Left cardiac atrium (tissue), 4 donors: ENCODE measurements at regions of chr3 and their contacts with region 1.

Region 1: GRCh38 chr3:32106280-32106928 is at the start of gene GPD1L:
- DNase-seq: peak; percentile 96
- ATAC-seq: peak; percentile 94 to 98
- total RNA-seq, gene GPD1L: 177 to 253 TPM

Region 2: DNA sequence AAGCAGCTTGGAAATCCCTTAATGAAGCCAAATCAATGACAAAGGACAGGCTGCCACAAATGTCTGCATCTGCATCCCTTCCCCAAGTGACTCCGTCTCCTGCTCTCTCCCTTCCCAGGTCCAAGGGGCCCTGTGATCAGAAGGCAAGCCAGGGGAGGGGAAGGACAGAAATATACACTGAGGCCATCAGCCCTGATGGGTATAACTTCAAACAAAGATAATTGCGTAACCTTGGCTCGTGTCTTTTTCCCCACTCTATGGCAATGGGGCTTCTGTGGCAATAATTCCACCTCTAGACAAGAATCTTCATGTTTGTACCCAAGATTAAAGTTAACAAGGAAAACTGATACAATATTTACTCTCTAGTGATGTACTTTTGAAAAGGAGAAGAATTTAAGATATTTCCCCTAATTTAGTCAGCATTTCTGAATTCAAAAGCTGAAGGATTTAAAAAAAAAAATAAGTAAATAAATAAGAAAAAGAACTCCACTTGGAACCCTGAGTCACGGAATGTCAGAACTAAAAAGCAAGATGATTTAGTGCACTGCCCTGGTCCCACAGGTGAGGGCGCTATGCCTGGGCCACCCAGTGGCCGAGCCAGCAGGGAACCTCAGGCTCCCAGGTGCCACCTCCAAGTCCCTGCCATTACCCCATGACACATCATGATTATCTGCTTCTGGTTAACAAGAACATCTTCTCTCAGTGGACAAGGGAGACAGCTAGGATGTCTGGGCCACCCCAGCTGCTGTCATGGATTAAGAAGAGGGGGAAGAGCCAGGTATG is 419.2 kb before region 1 on chr3:
- intact Hi-C with region 1: no loop called
- DNase-seq: no peak
- ATAC-seq: no peak

Region 3: DNA sequence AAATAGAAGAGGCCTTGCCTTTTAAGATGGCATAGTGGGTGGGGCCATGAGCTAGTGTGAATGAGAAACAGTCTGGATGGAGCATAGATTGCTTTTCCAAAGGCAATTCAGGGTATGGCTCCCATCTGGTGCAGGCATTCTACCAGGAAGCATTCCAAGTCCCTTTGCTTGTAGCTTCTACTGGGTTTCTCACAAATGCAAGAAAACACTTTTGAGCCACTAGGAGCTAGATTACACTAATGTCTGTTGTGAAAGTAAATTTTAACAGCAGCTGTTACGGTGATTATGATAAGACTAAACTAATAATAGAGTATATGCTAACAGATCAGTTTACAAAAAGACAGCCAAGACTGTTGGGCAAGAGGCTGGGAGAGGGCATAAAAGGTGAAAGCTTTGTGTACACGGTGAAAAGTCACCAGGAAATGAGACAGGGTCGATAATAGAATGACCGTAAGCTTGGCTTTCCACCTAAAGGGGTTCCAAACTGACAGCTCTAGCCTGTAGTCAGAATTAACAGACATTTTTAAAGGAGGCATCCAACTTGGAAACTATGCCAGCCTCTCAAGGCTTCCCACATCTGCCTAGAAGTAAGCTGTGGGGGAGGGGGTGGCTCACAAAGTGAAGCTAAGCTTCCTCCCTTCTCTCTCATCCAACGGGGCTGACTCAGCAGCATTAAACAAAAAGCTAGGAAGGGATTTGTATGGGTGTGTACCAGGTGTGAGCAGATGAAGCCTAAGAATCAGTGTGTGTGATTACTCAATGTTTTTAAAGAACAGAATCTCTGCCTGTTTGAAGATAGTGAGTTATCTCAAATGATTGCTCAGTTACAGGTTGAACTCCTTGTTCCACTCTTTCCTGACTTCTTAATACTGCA is 61.1 kb before region 1 on chr3:
- intact Hi-C with region 1: loop called in 1 of 2 experiments (anchors 10 kb)
- DNase-seq: peak; percentile 49
- ATAC-seq: peak; percentile 85 to 95

Region 4: DNA sequence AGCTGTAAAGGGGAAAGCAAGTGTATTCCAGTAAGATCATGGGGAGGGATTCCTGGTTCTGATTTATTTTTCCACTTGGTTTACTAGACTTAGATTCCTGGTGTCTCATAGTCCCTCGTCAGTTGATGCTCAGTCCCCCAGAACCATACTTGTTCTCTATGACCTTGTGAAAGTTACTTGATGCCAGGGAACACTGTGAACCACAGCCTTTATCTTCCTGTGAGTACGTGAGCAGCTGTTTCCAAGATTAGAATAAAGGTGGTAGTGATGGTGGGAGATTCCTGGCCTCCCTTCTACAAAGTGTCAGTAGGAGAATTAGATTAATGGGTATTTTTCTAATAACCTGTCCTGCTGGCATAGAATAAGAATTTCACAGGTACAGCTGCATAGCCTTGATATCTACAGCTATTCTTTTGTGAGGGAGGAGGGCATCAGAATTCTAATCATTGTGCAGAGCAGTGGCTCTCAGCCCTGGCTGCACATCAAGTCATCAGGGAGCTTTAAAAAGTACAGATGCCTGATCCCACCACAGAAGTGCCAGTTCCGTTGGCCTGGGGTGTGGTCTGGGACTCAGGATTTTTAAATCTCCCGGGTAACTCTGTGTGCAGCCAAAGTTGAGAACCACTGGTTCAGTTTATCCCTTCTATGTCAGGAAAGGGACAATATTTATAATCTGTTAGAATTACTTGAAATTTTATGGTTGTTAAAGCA is 20.1 kb after region 1 on chr3:
- intact Hi-C with region 1: loop called in 1 of 2 experiments (anchors 2 kb)
- DNase-seq: peak; percentile 56
- ATAC-seq: peak; percentile 87 to 88

Region 5: DNA sequence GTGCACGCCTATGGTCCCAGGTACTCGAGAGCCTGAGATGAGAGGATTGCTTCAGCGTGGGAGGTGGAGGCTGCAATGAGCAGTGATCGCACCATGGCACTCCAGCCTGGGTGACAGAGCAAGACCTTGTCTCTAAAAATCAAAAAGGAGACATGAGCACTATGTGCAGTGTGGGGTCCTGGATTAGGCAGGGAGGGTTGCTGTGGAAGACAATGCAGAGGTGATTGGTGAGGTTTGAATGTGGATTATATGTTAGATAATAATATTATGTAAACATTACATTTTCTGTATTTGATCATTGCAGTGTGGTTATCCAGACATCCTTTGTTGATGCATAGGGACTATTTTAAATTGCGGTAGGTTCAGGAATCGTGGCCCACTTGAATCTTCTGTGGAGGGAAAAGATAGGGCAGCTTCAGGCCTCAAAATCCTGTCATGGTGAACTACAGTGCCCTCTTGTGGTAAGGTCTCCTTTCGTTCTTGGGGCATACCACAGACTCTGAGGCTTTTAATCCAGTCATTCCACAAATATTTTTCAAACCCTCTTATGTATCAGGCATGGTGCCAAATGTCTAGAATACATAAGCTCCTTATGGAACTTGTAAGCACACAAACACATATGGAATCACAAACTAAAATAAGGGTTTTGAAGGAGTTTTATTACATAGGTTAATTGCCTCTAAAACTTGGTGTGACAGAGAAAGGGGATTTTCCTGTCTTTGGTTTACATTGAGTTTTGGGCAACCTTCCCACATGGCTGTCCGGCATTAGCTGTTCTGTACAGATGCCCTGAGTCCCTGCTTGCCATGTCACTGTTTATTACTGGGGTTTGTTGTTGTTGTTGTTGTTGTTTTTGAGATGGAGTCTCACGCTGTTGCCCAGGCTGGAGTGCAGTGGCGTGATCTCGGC is 37.7 kb after region 1 on chr3:
- intact Hi-C with region 1: loop called in 1 of 2 experiments (anchors 5 kb)
- DNase-seq: no peak
- ATAC-seq: peak; percentile 82 to 85